ENCODE measurements at regions of chr15 and their contacts with region 1.

Region 1: GRCh38 chr15:73781038-73781925 is 28.1 kb upstream of the INSYN1 start:
- DNase-seq: peak; percentile 34
- H3K4me3 ChIP-seq: no peak overlapping the region
- H3K27ac ChIP-seq: no peak overlapping the region
- H3K4me1 ChIP-seq: peaks cover 13% of the 10 kb centered on the region
- H3K27me3 ChIP-seq: no peaks in the 10 kb centered on the region
- CTCF ChIP-seq: peak; percentile 38 to 54

Region 2: DNA sequence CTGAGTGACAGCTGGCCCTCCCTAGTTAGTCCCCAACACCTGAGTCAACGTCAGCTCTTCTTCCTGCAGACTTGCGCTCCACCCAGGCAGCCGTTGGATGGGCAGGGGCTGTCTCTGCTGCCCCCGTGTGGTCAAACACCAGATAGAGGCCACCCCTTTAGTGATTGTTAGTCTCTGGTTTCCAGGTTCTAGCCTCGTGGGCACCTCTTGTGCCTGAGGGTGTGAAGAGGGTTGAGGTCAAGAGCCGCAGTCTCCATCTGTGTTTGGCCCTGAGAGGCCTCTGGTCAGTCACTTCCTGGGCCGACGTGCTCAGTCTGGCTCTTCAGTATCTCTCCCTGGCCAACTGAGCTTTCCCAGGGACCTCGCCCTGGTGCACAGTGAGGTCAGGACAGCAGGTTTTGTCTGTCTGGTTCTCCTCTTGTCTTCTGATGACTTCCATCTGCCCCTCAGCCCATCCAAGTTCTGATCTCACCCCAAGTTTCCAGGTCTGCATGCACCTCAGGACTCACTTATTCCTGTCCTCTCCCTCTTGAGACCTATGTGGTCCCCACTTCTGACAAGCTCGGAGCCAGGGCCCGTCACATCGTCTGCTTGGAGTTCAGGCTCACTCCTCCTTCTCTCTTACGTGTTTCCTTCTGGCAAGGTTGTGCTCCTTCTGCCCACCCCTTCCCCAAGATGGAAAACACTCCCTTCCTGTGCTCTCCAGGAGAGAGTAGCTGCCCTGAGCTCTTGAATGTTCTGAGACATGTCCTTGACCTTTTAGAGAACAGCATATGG is 76.2 kb before region 1 on chr15:
- CTCF ChIA-PET with region 1: no interaction called
- dilution Hi-C with region 1: no loop called
- in situ Hi-C with region 1: no loop called
- intact Hi-C with region 1: loop called (anchors 2 kb)
- DNase-seq: peak; percentile 27
- H3K4me3 ChIP-seq: no peak overlapping the region
- H3K27ac ChIP-seq: no peak overlapping the region
- H3K4me1 ChIP-seq: no peaks in the 10 kb centered on the region
- H3K27me3 ChIP-seq: no peaks in the 10 kb centered on the region
- CTCF ChIP-seq: peak; percentile 71 to 79

Region 3: DNA sequence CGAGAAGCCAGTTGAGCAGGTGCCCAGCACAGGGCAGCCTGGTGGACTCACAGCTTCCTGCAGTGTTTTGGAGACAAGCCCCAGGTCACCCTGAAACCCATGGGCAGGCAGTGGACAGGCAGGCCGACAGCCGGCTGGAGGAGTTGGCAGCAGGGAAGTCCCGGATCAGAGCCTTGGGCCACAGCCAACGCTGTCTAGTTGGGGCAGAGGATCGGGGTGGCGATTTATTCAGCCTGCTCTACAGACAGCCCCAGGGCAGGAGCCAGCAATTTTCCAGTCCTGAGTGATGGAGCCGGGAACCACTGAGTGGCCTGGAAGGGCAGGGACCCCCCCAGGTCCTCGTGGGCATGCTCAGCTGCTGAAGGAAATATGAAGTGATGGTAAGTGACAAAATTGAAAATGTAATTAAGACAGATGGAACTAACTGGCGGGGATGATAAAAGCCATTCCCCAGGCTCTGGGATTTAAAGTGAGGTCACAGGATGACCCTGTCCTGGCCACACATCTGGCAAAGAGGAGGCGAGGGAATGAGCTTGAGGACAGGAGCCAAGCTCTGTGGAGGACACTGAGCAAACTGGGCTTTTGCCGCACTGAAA is 57.6 kb after region 1 on chr15:
- CTCF ChIA-PET with region 1: no interaction called
- dilution Hi-C with region 1: no loop called
- in situ Hi-C with region 1: no loop called
- intact Hi-C with region 1: no loop called
- DNase-seq: no peak
- H3K4me3 ChIP-seq: no peak overlapping the region
- H3K27ac ChIP-seq: no peak overlapping the region
- H3K4me1 ChIP-seq: no peaks in the 10 kb centered on the region
- H3K27me3 ChIP-seq: peaks cover 10% of the 10 kb centered on the region
- CTCF ChIP-seq: no peak